Activated naive CD4-positive, alpha-beta T cell treated with anti-CD3 and anti-CD28 coated beads for 36 hours (primary cell): ENCODE measurements at regions of chr16 and their contacts with region 1.

Region 1: GRCh38 chr16:84062734-84063640 is 20.4 kb upstream of the SLC38A8 start:
- DNase-seq: peak; percentile 85
- H3K4me3 Mint-ChIP-seq: no peak overlapping the region
- H3K27ac Mint-ChIP-seq: peak overlapping the region; percentile 13
- H3K4me1 Mint-ChIP-seq: peaks cover 6% of the 10 kb centered on the region
- H3K27me3 Mint-ChIP-seq: no peaks in the 10 kb centered on the region

Region 2: DNA sequence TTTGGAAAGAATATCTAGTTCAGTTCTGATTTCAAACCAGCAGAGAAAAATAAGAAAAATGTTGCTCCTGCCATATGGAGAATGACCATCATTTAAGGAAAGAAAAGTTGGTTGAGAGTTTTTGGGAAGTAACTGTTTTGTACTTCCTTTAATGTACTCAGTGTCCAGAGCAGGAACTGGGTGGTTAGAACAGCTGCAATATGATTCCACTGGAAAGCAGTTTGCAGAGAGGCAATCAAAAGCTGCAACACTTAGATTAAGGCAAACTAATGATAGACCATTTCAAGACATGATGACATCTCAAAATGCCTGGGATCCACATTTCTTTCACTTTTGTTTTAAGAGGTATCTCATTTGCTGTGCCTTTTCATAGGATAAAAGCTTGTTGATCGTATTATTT is 568.5 kb before region 1 on chr16:
- CTCF ChIA-PET with region 1: no interaction called
- intact Hi-C with region 1: no loop called
- DNase-seq: no peak
- H3K4me3 Mint-ChIP-seq: no peak overlapping the region
- H3K27ac Mint-ChIP-seq: no peak overlapping the region
- H3K4me1 Mint-ChIP-seq: no peaks in the 10 kb centered on the region
- H3K27me3 Mint-ChIP-seq: no peaks in the 10 kb centered on the region

Region 3: DNA sequence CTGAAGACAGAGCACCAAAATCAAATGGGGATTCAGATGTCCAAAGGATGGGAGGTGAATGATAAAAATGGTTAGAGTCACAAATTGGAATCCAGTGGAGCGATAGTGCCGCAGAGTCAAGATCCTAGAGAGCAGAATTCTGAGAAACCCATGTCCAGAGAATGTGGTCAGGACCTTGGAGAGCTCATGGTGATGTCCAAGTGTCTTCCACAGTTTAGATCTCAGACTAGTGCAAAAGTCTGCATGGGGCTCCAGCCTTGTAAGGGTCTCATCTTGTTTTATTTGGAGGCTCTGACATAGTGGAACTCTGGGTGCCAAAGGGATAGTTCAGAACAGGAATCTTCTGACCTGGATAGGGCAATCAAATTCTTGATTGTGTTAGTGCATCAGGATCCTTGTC is 501.1 kb before region 1 on chr16:
- CTCF ChIA-PET with region 1: no interaction called
- intact Hi-C with region 1: no loop called
- DNase-seq: no peak
- H3K4me3 Mint-ChIP-seq: no peak overlapping the region
- H3K27ac Mint-ChIP-seq: no peak overlapping the region
- H3K4me1 Mint-ChIP-seq: no peaks in the 10 kb centered on the region
- H3K27me3 Mint-ChIP-seq: no peaks in the 10 kb centered on the region

Region 4: GRCh38 chr16:83826146-83826913 is 236.7 kb before region 1 on chr16:
- CTCF ChIA-PET with region 1: interaction called, 3 read pairs
- intact Hi-C with region 1: loop called (anchors 1 kb)
- DNase-seq: peak; percentile 88
- H3K4me3 Mint-ChIP-seq: no peak overlapping the region
- H3K27ac Mint-ChIP-seq: no peak overlapping the region
- H3K4me1 Mint-ChIP-seq: peaks cover 3% of the 10 kb centered on the region
- H3K27me3 Mint-ChIP-seq: no peaks in the 10 kb centered on the region

Region 5: DNA sequence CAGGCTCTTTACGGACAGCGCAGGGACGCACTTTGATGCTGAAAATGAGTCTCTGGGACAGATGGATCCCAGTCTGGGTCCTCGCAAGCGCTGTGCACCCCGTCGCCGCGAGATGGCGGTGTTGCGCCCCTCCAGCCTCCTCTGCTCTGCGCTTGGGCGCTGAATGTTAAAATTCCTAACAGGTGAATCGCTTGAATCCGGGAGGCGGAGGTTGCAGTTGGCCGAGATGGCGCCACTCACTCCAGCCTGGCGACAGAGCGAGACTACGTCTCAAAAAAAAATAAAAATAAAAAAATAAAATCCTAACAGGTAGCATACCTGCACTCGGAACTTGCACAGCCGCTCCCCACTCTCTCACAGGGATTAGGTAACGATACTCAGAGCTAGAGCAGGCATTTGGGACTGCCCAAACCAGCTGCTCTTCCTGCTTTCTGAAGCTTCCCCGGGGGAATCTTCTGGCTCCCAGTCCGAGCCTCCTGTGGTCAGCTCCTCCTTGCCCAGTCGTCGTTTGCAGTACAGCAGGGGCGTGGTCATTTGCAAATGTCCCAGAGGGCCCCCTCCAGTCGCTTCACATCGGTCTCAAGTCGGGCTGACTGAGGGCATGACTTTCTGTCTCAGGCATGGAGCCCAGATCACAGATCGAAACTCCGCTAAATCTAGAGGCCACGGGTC is 136.1 kb before region 1 on chr16:
- CTCF ChIA-PET with region 1: interaction called, 17 read pairs
- intact Hi-C with region 1: loop called (anchors 1 kb)
- DNase-seq: peak; percentile 74
- H3K4me3 Mint-ChIP-seq: no peak overlapping the region
- H3K27ac Mint-ChIP-seq: no peak overlapping the region
- H3K4me1 Mint-ChIP-seq: peaks cover 2% of the 10 kb centered on the region
- H3K27me3 Mint-ChIP-seq: no peaks in the 10 kb centered on the region

Region 6: GRCh38 chr16:84175350-84176081 is 112.5 kb after region 1 on chr16:
- CTCF ChIA-PET with region 1: interaction called, 26 read pairs
- intact Hi-C with region 1: no loop called
- DNase-seq: peak; percentile 83
- H3K4me3 Mint-ChIP-seq: no peak overlapping the region
- H3K27ac Mint-ChIP-seq: no peak overlapping the region
- H3K4me1 Mint-ChIP-seq: peaks cover 17% of the 10 kb centered on the region
- H3K27me3 Mint-ChIP-seq: no peaks in the 10 kb centered on the region

Region 7: DNA sequence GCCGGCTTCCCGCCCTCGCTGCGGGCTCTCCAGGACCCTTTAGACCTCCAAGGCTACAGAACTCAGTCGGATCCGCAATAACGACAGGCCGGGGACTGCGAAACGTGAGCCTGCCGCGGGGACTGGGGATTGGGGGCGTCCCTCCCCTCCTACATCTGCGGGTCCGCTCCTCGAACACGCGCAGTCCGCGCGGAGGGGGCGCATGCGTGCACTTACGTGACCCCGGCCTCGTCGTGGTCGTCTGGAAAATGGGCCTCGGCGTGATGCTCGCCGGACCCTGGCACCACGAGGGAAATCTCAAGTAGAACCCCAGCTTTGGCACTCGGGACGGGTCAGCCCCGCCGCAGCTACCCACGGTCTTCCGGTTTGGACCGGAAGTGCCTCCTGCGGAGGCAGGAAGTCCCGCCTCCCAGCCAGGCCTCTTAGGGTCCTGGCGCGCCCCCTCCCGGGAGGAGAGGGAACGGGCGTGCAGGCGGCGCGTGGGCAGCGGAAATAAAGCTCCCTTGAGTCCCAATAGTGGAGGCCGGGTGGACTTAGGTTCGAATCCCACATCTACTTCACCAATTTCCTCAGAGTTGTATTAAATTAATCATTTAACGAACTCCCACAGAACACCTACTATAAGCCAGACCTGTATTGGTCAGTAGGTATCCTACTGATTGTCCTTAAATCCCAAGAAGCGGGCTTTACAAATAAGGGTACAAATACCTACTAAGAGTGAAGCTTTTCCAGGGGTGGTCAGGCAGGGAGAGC is 123.9 kb after region 1 on chr16 and contains the start of gene TAF1C:
- CTCF ChIA-PET with region 1: interaction called, 13 read pairs
- intact Hi-C with region 1: no loop called
- DNase-seq: peak; percentile 94
- H3K4me3 Mint-ChIP-seq: peak within 1 kb of the TSS; percentile 93
- H3K27ac Mint-ChIP-seq: peak within 1 kb of the TSS; percentile 89
- H3K4me1 Mint-ChIP-seq: peaks cover 21% of the 10 kb centered on the region
- H3K27me3 Mint-ChIP-seq: no peaks in the 10 kb centered on the region
- total RNA-seq, gene TAF1C: 59.3 to 66.2 TPM